CD4-positive, alpha-beta T cell (primary cell): ENCODE measurements at regions of chr11 and their contacts with region 1.

Region 1: DNA sequence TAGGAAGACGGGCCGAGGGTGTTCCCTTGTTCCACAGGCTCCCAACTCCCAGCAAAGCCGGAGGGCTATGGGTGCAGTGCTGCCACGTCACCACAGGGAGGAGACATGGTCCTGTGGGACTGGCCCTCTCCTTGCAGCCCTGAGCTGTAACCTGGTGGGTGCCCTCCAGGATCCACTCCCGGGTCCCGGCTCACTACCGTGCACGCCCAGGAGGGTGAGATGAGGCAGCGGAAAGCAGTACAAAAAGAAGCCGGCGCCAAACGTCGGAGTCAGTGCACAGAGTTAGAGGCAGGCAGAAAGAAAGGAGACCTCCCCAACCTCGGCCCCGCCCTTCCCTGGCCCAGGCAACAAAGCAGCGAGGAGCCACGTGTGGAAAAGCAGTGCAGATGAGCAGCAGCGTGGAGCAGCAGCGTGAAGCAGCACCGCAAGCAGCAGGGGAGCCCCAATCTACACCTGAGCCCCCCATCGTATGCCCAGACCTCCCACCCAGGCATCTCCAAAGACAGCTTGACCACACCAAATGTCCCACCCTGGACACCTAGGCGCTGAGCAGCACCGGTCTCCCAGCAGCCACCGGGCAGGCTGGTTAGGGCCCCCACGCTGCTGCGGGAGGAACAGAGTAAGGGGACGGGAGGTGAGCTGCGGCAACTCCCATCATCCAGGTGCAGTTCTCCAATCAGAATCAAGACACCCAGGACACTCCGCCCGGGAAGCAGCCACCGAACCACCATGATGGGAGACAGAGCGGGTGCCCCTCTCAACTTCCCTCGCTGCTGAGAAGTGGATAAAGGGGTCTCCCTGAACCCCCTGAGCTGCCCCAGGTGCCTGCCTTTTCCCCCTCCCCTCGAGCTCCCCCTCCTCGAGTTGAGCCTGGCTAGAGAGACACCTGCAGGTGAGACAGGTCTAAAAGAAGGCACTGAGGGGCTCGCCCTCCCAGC is 28.8 kb downstream of the IGSF9B start:
- DNase-seq: peak; percentile 44 to 83 (median 65)
- ATAC-seq: peak; percentile 82
- H3K4me3 ChIP-seq: peak overlapping the region; percentile 35
- H3K4me3 Mint-ChIP-seq: peak overlapping the region; percentile 83
- H3K27ac ChIP-seq: no peak overlapping the region
- H3K27ac Mint-ChIP-seq: peak overlapping the region; percentile 89
- H3K4me1 ChIP-seq: peaks cover 34% of the 10 kb centered on the region
- H3K4me1 Mint-ChIP-seq: peaks cover 28% of the 10 kb centered on the region
- H3K27me3 ChIP-seq: no peaks in the 10 kb centered on the region
- H3K27me3 Mint-ChIP-seq: no peaks in the 10 kb centered on the region
- CTCF ChIP-seq: peak; percentile 89

Region 2: GRCh38 chr11:133947321-133947756 is 19.4 kb after region 1 on chr11:
- CTCF ChIA-PET with region 1: interaction called, 20 read pairs
- POLR2A ChIA-PET with region 1: interaction called, 48 read pairs
- intact Hi-C with region 1: loop called (anchors 1 to 2 kb)
- DNase-seq: peak; percentile 41 to 85 (median 62)
- ATAC-seq: peak; percentile 32
- H3K4me3 ChIP-seq: peak overlapping the region; percentile 30
- H3K4me3 Mint-ChIP-seq: peak overlapping the region; percentile 68
- H3K27ac ChIP-seq: peak overlapping the region in 1 of 2 donors; percentile 47
- H3K27ac Mint-ChIP-seq: peak overlapping the region; percentile 89
- H3K4me1 ChIP-seq: peaks cover 69% of the 10 kb centered on the region
- H3K4me1 Mint-ChIP-seq: peaks cover 69% of the 10 kb centered on the region
- H3K27me3 ChIP-seq: no peaks in the 10 kb centered on the region
- H3K27me3 Mint-ChIP-seq: peaks cover under 1% of the 10 kb centered on the region
- CTCF ChIP-seq: peak; percentile 49

Region 3: GRCh38 chr11:133956650-133957633 is 29.0 kb after region 1 on chr11 and contains the start of gene IGSF9B:
- CTCF ChIA-PET with region 1: interaction called, 14 read pairs
- POLR2A ChIA-PET with region 1: interaction called, 8 read pairs
- intact Hi-C with region 1: loop called in 1 of 2 experiments (anchors 5 kb)
- DNase-seq: peak; percentile 82 to 94 (median 90)
- ATAC-seq: peak; percentile 91
- H3K4me3 ChIP-seq: peak within 1 kb of the TSS; percentile 93
- H3K4me3 Mint-ChIP-seq: peak within 1 kb of the TSS; percentile 87
- H3K27ac ChIP-seq: peak within 1 kb of the TSS in 1 of 2 donors; percentile 41
- H3K27ac Mint-ChIP-seq: peak within 1 kb of the TSS; percentile 77
- H3K4me1 ChIP-seq: peaks cover 46% of the 10 kb centered on the region
- H3K4me1 Mint-ChIP-seq: peaks cover 46% of the 10 kb centered on the region
- H3K27me3 ChIP-seq: peaks cover 15 to 16% of the 10 kb centered on the region in 2 experiments
- H3K27me3 Mint-ChIP-seq: peaks cover 20% of the 10 kb centered on the region
- CTCF ChIP-seq: no peak
- total RNA-seq, gene IGSF9B: 24.3 to 27.4 TPM

Region 4: GRCh38 chr11:134033696-134034491 is 105.9 kb after region 1 on chr11:
- CTCF ChIA-PET with region 1: interaction called, 8 read pairs
- POLR2A ChIA-PET with region 1: interaction called, 5 read pairs
- intact Hi-C with region 1: loop called in 1 of 2 experiments (anchors 5 kb)
- DNase-seq: peak; percentile 47 to 82 (median 62)
- ATAC-seq: peak; percentile 81
- H3K4me3 ChIP-seq: peak overlapping the region; percentile 39
- H3K4me3 Mint-ChIP-seq: peak overlapping the region; percentile 79
- H3K27ac ChIP-seq: no peak overlapping the region
- H3K27ac Mint-ChIP-seq: peak overlapping the region; percentile 81
- H3K4me1 ChIP-seq: peaks cover 53% of the 10 kb centered on the region
- H3K4me1 Mint-ChIP-seq: peaks cover 71% of the 10 kb centered on the region
- H3K27me3 ChIP-seq: no peaks in the 10 kb centered on the region
- H3K27me3 Mint-ChIP-seq: no peaks in the 10 kb centered on the region
- CTCF ChIP-seq: no peak

Region 5: DNA sequence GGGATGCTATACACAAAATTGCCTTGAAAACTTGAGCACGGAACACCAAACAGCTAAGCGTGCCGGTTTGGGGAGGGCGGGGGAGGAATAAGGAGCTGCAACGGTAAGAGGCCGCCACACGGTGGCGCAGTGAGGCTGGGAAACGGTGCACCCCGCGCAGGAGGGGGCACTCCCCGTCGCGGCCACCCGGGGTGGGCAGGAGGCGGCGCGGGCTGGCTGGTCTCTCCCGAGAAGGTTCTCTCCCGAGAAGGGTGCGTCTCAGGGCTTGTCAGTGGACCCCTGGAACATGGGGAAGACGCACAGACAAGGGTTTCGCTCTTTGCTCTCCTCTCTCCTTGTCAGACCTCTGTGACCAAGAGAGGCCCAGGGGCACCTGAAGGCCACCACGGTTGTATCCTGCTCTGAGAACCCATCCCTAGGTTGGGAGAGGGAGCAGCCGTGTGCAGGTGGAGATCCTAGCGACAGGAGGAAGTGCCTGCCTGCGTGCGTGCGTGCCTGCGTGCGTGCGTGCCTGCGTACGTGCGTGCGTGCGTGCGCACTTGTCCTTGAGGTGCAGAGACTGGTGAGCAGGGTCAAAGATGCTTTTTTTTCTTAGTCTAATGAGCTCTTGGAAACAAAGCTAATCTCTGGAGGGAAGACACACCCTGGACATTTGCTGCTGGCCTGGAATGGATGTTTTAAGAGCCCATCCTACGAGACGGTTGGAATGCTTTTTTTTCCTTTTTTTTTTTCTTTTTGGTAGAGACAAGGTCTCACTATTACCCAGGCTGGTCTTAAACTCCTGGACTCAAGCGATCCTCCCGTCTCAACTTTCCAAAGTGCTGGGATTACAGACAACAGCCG is 122.8 kb after region 1 on chr11:
- CTCF ChIA-PET with region 1: interaction called, 12 read pairs
- POLR2A ChIA-PET with region 1: interaction called, 9 read pairs
- intact Hi-C with region 1: loop called in 1 of 2 experiments (anchors 1 kb)
- DNase-seq: peak; percentile 55 to 87 (median 70)
- ATAC-seq: peak; percentile 96
- H3K4me3 ChIP-seq: no peak overlapping the region
- H3K4me3 Mint-ChIP-seq: no peak overlapping the region
- H3K27ac ChIP-seq: no peak overlapping the region
- H3K27ac Mint-ChIP-seq: no peak overlapping the region
- H3K4me1 ChIP-seq: peaks cover 8% of the 10 kb centered on the region
- H3K4me1 Mint-ChIP-seq: peaks cover 5% of the 10 kb centered on the region
- H3K27me3 ChIP-seq: peaks cover 0 to 9% of the 10 kb centered on the region in 2 experiments
- H3K27me3 Mint-ChIP-seq: peaks cover 34% of the 10 kb centered on the region
- CTCF ChIP-seq: peak; percentile 93

Region 6: DNA sequence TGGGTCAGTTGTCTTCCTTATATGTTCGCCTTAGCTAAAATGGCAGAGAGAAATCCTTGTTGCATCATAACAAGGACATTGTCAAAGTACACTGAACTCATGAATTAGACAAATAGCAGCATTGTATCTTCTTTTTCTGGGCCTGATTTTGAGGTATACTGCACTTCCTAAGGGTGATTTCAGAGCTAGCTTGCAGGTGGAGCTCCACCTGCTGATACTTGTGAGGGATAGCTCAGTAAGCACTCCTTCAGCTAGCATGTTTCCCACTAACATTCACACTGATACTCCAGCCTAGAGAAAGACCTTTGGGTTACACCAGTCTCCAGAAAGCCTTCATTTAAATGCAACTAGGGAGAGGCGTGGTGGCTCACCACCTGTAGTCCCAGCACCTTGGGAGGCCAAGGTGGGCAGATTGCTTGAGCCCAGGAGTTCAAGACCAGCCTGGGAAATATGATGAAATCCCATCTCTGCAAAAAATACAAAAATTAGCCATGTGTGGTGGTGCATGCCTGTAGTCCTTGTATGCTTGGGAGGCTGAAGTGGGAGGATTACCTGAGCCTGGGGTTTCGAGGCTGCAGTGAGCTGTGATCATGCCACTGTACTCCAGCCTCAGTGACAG is 170.7 kb after region 1 on chr11:
- CTCF ChIA-PET with region 1: no interaction called
- POLR2A ChIA-PET with region 1: interaction called, 8 read pairs
- intact Hi-C with region 1: loop called in 1 of 2 experiments (anchors 2 kb)
- DNase-seq: peak in 3 of 14 experiments; percentile 15 to 44 (median 28)
- ATAC-seq: peak; percentile 49
- H3K4me3 ChIP-seq: no peak overlapping the region
- H3K4me3 Mint-ChIP-seq: no peak overlapping the region
- H3K27ac ChIP-seq: no peak overlapping the region
- H3K27ac Mint-ChIP-seq: no peak overlapping the region
- H3K4me1 ChIP-seq: no peaks in the 10 kb centered on the region
- H3K4me1 Mint-ChIP-seq: no peaks in the 10 kb centered on the region
- H3K27me3 ChIP-seq: no peaks in the 10 kb centered on the region
- H3K27me3 Mint-ChIP-seq: no peaks in the 10 kb centered on the region
- CTCF ChIP-seq: no peak

Region 7: GRCh38 chr11:134139873-134140331 is 211.9 kb after region 1 on chr11:
- CTCF ChIA-PET with region 1: interaction called, 7 read pairs
- POLR2A ChIA-PET with region 1: no interaction called
- intact Hi-C with region 1: loop called (anchors 1 kb)
- DNase-seq: peak in 13 of 14 experiments; percentile 6 to 76 (median 32)
- ATAC-seq: peak; percentile 88
- H3K4me3 ChIP-seq: no peak overlapping the region
- H3K4me3 Mint-ChIP-seq: no peak overlapping the region
- H3K27ac ChIP-seq: no peak overlapping the region
- H3K27ac Mint-ChIP-seq: no peak overlapping the region
- H3K4me1 ChIP-seq: peaks cover 5% of the 10 kb centered on the region
- H3K4me1 Mint-ChIP-seq: peaks cover 4% of the 10 kb centered on the region
- H3K27me3 ChIP-seq: no peaks in the 10 kb centered on the region
- H3K27me3 Mint-ChIP-seq: no peaks in the 10 kb centered on the region
- CTCF ChIP-seq: peak; percentile 77